A549 (cell line): ENCODE measurements at regions of chr17 and their contacts with region 1.

Region 1: DNA sequence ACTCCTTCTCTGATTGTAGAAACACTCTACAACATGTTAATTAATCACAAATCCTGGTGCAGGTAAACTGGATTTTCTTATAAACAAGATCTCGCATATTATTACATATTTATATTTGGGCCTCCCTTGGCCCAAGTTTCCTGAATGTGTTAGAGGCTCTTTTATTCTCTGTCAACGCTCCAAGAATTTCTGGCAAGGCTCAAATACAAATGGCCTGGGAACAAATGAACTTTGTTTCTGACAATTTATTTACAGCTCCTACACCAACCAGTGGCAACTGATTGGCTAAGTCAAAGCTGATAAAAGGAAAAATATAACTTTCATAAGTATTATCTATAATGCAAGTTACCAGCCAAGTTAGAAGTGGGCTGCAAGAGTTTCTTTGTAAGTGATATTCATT is 64.9 kb upstream of the CORO6 start:
- DNase-seq: no peak
- ATAC-seq: no peak
- H3K4me3 ChIP-seq: no peak overlapping the region
- H3K27ac ChIP-seq: no peak overlapping the region
- H3K4me1 ChIP-seq: peaks cover 7% of the 10 kb centered on the region
- CTCF ChIP-seq: no peak
- EP300 ChIP-seq: no peak
- POLR2A ChIP-seq: no peak
- RAD21 ChIP-seq: no peak

Region 2: DNA sequence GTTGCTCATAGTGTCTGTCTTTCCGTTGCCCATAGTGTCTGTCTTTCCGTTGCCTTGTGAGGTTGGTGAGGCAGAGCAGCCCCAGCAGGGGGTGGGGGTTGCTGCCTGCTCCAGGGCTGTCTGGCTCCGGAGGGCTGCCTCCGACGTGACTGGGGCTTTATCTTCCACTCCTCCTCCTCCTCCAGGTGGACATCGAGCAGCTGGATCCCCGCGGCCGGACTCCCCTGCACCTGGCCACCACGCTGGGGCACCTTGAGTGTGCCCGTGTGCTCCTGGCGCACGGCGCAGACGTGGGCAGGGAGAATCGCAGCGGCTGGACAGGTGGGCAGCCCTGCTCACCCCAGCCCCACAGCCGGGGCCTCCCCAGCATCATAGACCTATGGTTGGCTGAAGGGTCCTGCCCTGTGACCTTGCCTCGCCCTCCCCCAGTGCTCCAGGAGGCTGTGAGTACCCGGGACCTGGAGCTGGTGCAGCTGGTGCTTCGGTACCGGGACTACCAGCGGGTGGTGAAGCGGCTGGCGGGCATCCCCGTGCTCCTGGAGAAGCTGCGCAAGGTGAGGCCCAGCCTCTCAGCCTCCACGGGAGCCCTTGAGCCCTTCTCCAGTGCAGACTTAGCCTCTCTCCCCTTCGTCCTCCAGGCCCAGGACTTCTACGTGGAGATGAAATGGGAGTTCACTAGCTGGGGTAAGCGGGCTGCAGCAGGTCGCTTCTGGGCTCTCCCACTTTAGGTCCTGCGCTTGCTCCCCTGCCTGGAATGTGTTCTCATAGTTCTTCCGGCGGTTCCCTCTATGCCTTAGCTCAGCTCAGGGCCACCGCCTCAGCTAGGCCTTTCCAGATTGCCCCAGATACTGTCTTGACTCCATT is 79.8 kb before region 1 on chr17:
- CTCF ChIA-PET with region 1: no interaction called
- POLR2A ChIA-PET with region 1: no interaction called
- DNase-seq: no peak
- ATAC-seq: no peak
- H3K4me3 ChIP-seq: no peak overlapping the region
- H3K27ac ChIP-seq: no peak overlapping the region
- H3K4me1 ChIP-seq: no peaks in the 10 kb centered on the region
- CTCF ChIP-seq: no peak
- EP300 ChIP-seq: no peak
- POLR2A ChIP-seq: no peak
- RAD21 ChIP-seq: no peak

Region 3: GRCh38 chr17:29699283-29699682 is 11.7 kb after region 1 on chr17:
- CTCF ChIA-PET with region 1: interaction called, 11 read pairs
- POLR2A ChIA-PET with region 1: no interaction called
- DNase-seq: no peak
- ATAC-seq: no peak
- H3K4me3 ChIP-seq: no peak overlapping the region
- H3K27ac ChIP-seq: no peak overlapping the region
- H3K4me1 ChIP-seq: no peaks in the 10 kb centered on the region
- CTCF ChIP-seq: no peak
- EP300 ChIP-seq: no peak
- POLR2A ChIP-seq: no peak
- RAD21 ChIP-seq: no peak